Dorsolateral prefrontal cortex (tissue), 120 donors: ENCODE measurements at regions of chr11 and their contacts with region 1.

Region 1: GRCh38 chr11:133531971-133532651 is at the start of gene OPCML:
- DNase-seq: peak in 8 of 10 donors; percentile 21 to 75 (median 59)
- H3K4me3 ChIP-seq: peak within 1 kb of the TSS; percentile 3 to 72 (median 52)
- H3K27ac ChIP-seq: peak within 1 kb of the TSS in 57 of 59 donors; percentile 36 to 88 (median 81)
- H3K27me3 ChIP-seq: peaks cover 0 to 60% (median 21%) of the 10 kb centered on the region in 45 donors
- CTCF ChIP-seq: no peak
- total RNA-seq, gene OPCML: 75.9 to 296 (median 202) TPM

Region 2: GRCh38 chr11:133815636-133816035 is 283.5 kb after region 1 on chr11:
- intact Hi-C with region 1: loop called in 1 of 2 experiments (anchors 5 kb)
- DNase-seq: peak in 3 of 10 donors; percentile 54 to 78 (median 76)
- H3K4me3 ChIP-seq: no peak overlapping the region
- H3K27ac ChIP-seq: peak overlapping the region in 27 of 59 donors; percentile 1 to 78 (median 56)
- H3K27me3 ChIP-seq: peaks cover 0 to 15% (median 0%) of the 10 kb centered on the region in 45 donors
- CTCF ChIP-seq: no peak